ENCODE measurements at regions of chr12 and their contacts with region 1.

Region 1: GRCh38 chr12:29317556-29318363 is 63.2 kb downstream of the ERGIC2 start:
- DNase-seq: peak; percentile 38
- H3K4me3 ChIP-seq: peak overlapping the region; percentile 49
- H3K27ac ChIP-seq: peak overlapping the region; percentile 85
- H3K4me1 ChIP-seq: peaks cover 34% of the 10 kb centered on the region
- H3K27me3 ChIP-seq: no peaks in the 10 kb centered on the region
- CTCF ChIP-seq: peak; percentile 85

Region 2: DNA sequence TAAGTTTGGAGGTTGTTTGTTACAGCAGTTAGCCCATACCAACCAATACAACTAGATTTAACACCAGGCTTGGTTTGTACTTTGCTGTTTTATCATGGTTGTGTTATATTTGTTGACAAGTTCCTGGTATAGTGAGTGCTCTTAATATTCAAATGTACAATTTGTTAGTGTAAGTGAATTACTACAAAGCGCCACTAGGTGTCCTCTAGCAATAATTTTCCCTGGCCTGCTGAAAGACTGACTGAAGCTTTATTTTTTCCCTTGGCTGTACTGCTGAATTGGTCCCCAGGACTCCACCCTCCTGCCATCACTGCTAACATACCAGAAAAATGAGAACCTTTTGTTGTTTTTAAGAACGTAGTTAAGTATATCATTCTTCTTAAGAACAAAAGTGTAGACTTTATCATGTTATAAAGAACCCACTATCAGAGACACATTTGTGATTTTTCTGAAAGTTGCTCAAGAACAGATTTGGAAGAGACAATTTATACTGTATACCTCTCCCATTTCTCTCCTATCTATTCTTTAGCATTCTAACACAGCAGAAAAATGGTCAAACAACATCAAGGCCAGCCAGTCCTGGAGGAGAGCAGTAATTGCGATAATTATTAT is 244.0 kb before region 1 on chr12:
- intact Hi-C with region 1: loop called (anchors 5 kb)
- DNase-seq: no peak
- H3K4me3 ChIP-seq: no peak overlapping the region
- H3K27ac ChIP-seq: no peak overlapping the region
- H3K4me1 ChIP-seq: no peaks in the 10 kb centered on the region
- H3K27me3 ChIP-seq: no peaks in the 10 kb centered on the region
- CTCF ChIP-seq: peak; percentile 77

Region 3: GRCh38 chr12:29389295-29389919 is 71.6 kb after region 1 on chr12:
- intact Hi-C with region 1: no loop called
- DNase-seq: no peak
- H3K4me3 ChIP-seq: peak overlapping the region; percentile 14
- H3K27ac ChIP-seq: no peak overlapping the region
- H3K4me1 ChIP-seq: no peaks in the 10 kb centered on the region
- H3K27me3 ChIP-seq: no peaks in the 10 kb centered on the region
- CTCF ChIP-seq: no peak

Region 4: GRCh38 chr12:29545102-29545467 is 227.3 kb after region 1 on chr12:
- intact Hi-C with region 1: no loop called
- DNase-seq: no peak
- H3K4me3 ChIP-seq: no peak overlapping the region
- H3K27ac ChIP-seq: no peak overlapping the region
- H3K4me1 ChIP-seq: peaks cover 42% of the 10 kb centered on the region
- H3K27me3 ChIP-seq: no peaks in the 10 kb centered on the region
- CTCF ChIP-seq: no peak